ENCODE measurements at regions of chr19 and their contacts with region 1.

Region 1: GRCh38 chr19:4246767-4247593 is at the start of gene YJU2:
- DNase-seq: peak; percentile 99 to 100 (median 99)
- ATAC-seq: peak; percentile 99
- H3K4me3 ChIP-seq: peak within 1 kb of the TSS; percentile 78
- H3K27ac ChIP-seq: peak within 1 kb of the TSS; percentile 100
- H3K4me1 ChIP-seq: peaks cover 7 to 12% of the 10 kb centered on the region in 2 experiments; a peak in 4 of 5 replicates
- H3K27me3 ChIP-seq: no peaks in the 10 kb centered on the region
- CTCF ChIP-seq: peak; percentile 74 to 85 (median 80)
- EP300 ChIP-seq: no peak; the same call in 1 of the 2 replicates
- POLR2A ChIP-seq: peak; percentile 93
- RAD21 ChIP-seq: peak; percentile 44 to 59; a peak in 3 of 4 replicates
- polyA plus RNA-seq, gene YJU2: 0.41 to 1.4 TPM

Region 2: DNA sequence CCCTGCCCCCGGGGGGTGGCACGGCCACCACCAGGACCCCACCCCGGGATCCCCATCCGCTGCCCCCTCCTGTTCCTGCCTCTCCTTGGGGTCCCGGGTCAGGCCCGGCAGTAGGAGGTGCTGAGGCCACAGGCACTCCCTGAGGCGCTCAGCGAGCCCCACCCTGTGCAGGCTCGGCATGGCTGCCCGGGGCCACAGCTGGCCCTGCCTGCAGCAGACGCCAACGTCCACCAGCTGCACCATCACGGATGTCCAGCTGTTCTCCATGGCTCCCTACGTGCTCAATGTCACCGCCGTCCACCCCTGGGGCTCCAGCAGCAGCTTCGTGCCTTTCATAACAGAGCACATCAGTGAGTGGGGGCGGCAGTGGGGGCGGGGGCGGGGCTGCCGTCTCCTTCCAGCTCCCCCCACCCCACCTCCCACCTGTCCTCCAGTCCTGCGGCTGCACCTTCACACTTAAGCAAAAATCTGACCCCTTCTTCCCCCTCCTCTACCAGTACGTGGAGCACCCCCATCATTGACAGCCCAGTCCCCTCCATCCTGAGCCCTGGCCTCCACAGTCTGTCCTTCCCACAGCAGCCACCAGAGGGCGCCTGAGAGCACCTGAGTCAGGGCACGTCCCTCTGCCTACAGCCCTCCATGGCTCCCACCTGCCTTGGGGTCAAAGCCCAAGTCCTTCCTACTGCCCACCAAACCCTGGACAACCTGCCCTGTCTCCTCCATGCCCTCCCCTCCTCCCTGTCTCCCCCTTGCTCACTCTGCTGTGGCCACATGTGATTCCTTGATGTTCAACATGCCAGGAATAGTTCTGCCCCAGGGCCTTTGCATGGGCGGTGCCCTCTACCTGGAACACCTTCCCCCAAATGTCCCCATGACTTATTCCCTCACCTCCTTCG is 13.8 kb before region 1 on chr19:
- CTCF ChIA-PET with region 1: no interaction called
- POLR2A ChIA-PET with region 1: interaction called, 13 read pairs
- in situ Hi-C with region 1: no loop called
- intact Hi-C with region 1: no loop called
- DNase-seq: peak; percentile 65 to 82 (median 76)
- ATAC-seq: peak; percentile 86
- H3K4me3 ChIP-seq: 0 out of 2 replicates have a peak overlapping the region, but pooled peaks have one; percentile 1
- H3K27ac ChIP-seq: no peak overlapping the region
- H3K4me1 ChIP-seq: peaks cover 5 to 32% of the 10 kb centered on the region in 2 experiments; a peak in 4 of 5 replicates
- H3K27me3 ChIP-seq: peaks cover 12 to 27% of the 10 kb centered on the region in 2 experiments; a peak in 3 of 5 replicates
- CTCF ChIP-seq: peak; percentile 77 to 96 (median 86)
- EP300 ChIP-seq: no peak
- POLR2A ChIP-seq: no peak
- RAD21 ChIP-seq: peak in 1 of 2 experiments; percentile 62; a peak in 2 of 4 replicates

Region 3: GRCh38 chr19:4638828-4639530 is 392.0 kb after region 1 on chr19 and contains the start of gene TNFAIP8L1:
- CTCF ChIA-PET with region 1: no interaction called
- POLR2A ChIA-PET with region 1: no interaction called
- in situ Hi-C with region 1: no loop called
- intact Hi-C with region 1: no loop called
- DNase-seq: peak; percentile 96 to 100 (median 100)
- ATAC-seq: peak; percentile 92
- H3K4me3 ChIP-seq: peak within 1 kb of the TSS; percentile 71
- H3K27ac ChIP-seq: peak within 1 kb of the TSS; percentile 93
- H3K4me1 ChIP-seq: peaks cover 31 to 61% of the 10 kb centered on the region in 2 experiments
- H3K27me3 ChIP-seq: no peaks in the 10 kb centered on the region
- CTCF ChIP-seq: no peak
- EP300 ChIP-seq: peak; percentile 63; the same call in 1 of the 2 replicates
- POLR2A ChIP-seq: no peak; the same call in 1 of the 2 replicates
- RAD21 ChIP-seq: no peak
- polyA plus RNA-seq, gene TNFAIP8L1: 0.69 to 1.0 TPM

Measured in K562 (cell line).